PC-9 (cell line): ENCODE measurements at regions of chr11 and their contacts with region 1.

Region 1: DNA sequence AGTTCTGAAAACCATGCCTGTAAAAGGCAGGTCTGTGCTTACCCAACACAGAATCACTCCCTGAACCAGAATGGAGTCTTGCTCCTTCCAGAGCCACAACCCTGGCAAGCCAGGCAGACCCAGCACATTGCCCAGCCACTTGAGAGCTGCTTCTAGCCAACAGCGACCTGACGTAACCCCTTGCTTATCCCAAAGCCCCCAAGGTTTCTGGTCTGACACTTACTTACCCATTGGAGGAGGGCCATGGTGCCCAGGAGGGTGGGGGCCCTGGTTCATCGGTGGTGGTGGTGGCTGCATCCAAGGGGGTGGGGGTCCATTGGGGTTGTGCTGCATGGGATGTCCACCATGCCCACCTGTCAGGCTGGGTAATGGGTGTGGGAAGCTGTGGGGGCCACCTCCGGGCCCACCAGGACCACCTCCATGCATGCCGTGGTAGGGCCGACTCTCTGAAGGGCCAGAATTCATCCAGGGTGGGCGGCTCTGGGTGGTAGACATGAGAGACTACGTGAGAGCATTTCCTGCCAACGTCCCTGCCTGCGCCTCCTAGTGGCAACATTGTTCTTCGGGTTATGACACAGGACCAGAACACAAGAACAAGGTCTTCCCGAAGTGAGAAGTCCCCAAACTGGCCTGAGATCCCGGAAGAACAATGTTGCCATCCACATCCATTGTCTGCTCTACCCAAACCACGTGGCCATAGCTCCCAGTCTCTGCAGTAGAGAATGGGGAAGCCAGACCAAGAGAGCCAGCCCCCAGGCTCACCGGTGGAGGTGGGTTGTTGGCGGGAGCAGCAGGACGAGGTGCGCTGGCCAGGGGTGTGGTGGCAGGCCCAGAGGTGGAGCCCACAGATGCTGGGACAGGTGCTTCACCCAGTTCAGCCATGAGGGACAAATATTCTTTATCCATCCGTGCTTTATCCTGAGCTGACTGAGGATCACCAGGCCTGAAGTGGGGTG is 7.8 kb upstream of the PYGM start:
- DNase-seq: peak in 1 of 2 experiments; percentile 52
- H3K4me3 ChIP-seq: no peak overlapping the region
- H3K27ac ChIP-seq: no peak overlapping the region
- H3K4me1 ChIP-seq: no peaks in the 10 kb centered on the region
- H3K27me3 ChIP-seq: no peaks in the 10 kb centered on the region
- CTCF ChIP-seq: peak; percentile 93

Region 2: GRCh38 chr11:64665411-64665821 is 102.2 kb before region 1 on chr11:
- CTCF ChIA-PET with region 1: no interaction called
- POLR2A ChIA-PET with region 1: interaction called, 10 read pairs
- intact Hi-C with region 1: no loop called
- DNase-seq: peak; percentile 53 to 65
- H3K4me3 ChIP-seq: no peak overlapping the region
- H3K27ac ChIP-seq: no peak overlapping the region
- H3K4me1 ChIP-seq: no peaks in the 10 kb centered on the region
- H3K27me3 ChIP-seq: peaks cover 15% of the 10 kb centered on the region
- CTCF ChIP-seq: no peak

Region 3: DNA sequence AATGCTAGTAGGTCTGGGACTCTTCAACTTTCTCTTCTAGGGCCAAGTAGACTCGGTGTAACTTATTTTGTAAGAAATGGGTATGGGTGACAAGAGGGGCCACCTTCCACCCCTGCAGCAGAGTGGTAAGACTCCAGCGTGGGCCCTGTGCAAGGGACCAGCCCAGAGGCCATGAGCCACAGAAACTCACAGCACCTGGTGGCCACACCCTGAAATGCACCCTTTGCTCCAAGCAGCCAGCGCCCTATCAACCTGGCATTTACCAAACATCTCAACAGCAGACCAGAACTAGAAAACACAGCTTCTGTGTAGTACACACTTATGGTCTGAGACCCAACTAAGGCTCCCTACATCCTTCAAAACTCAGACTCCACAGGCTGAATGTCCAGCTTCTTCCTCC is 310.5 kb after region 1 on chr11:
- CTCF ChIA-PET with region 1: interaction called, 22 read pairs
- POLR2A ChIA-PET with region 1: no interaction called
- intact Hi-C with region 1: no loop called
- DNase-seq: peak; percentile 35 to 39
- H3K4me3 ChIP-seq: no peak overlapping the region
- H3K27ac ChIP-seq: no peak overlapping the region
- H3K4me1 ChIP-seq: peaks cover 8% of the 10 kb centered on the region
- H3K27me3 ChIP-seq: no peaks in the 10 kb centered on the region
- CTCF ChIP-seq: peak; percentile 79